ENCODE measurements at regions of chr12 and their contacts with region 1.

Region 1: DNA sequence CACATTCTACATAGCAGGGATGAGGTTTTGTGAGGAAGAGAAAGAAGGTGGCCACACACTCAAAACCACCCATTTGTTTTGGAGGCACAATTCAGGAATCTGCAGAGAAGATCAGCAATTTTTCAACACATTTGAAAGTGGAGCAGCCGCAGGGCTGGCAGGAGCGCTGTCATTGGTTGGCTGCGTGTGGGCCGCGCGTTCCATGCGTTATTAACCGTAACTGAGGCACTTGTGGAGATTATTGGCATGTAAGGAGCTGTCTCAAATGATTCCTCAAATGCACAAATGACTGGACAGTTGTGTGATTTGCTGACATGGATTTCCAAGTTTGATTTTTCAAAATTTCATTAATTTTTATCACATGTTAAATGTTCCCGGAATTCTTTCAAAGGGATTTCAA is 318.5 kb downstream of the TMEM132D start:
- DNase-seq: no peak
- ATAC-seq: no peak
- H3K4me3 ChIP-seq: no peak overlapping the region
- H3K27ac ChIP-seq: no peak overlapping the region
- H3K4me1 ChIP-seq: no peaks in the 10 kb centered on the region
- H3K27me3 ChIP-seq: no peaks in the 10 kb centered on the region
- CTCF ChIP-seq: no peak

Region 2: GRCh38 chr12:129162805-129163204 is 422.5 kb before region 1 on chr12:
- intact Hi-C with region 1: no loop called
- DNase-seq: no peak
- ATAC-seq: no peak
- H3K4me3 ChIP-seq: no peak overlapping the region
- H3K27ac ChIP-seq: no peak overlapping the region
- H3K4me1 ChIP-seq: no peaks in the 10 kb centered on the region
- H3K27me3 ChIP-seq: peaks cover 0 to 8% (median 0%) of the 10 kb centered on the region in 7 donors
- CTCF ChIP-seq: no peak

Region 3: DNA sequence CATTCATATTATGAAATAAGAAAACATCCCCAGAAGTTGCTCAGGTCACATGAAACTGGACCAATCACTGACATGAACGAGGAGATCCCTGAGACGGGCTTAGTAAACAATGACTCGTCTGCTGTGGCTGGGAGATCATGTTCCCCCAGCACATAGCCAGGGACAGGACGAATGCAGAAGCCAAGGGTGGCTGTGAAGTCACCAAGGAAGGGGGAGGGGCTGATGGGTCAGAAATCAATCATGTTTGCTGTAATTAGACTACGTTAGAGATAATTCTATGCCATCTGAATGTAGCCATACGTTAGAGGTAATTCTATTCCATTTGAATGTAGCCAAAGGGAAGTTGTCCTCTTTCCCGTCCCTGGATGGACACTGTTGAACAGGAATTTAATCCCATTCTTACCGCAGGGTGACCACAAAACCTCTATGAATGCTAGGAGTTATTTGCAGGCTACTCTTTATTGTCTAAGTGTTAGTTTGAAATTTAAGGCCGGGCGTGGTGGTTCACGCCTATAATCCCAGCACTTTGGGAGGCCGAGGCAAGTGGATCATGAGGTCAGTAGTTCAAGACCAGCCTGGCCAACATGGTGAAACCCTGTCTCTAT is 14.4 kb before region 1 on chr12:
- intact Hi-C with region 1: loop called in 1 of 10 experiments (anchors 2 kb)
- DNase-seq: no peak
- ATAC-seq: no peak
- H3K4me3 ChIP-seq: no peak overlapping the region
- H3K27ac ChIP-seq: no peak overlapping the region
- H3K4me1 ChIP-seq: no peaks in the 10 kb centered on the region
- H3K27me3 ChIP-seq: no peaks in the 10 kb centered on the region
- CTCF ChIP-seq: no peak

Region 4: GRCh38 chr12:129629901-129630300 is 44.6 kb after region 1 on chr12:
- intact Hi-C with region 1: no loop called
- DNase-seq: no peak
- ATAC-seq: no peak
- H3K4me3 ChIP-seq: no peak overlapping the region
- H3K27ac ChIP-seq: no peak overlapping the region
- H3K4me1 ChIP-seq: no peaks in the 10 kb centered on the region
- H3K27me3 ChIP-seq: no peaks in the 10 kb centered on the region
- CTCF ChIP-seq: no peak